Naive thymus-derived CD4-positive, alpha-beta T cell (primary cell): ENCODE measurements at regions of chr14 and their contacts with region 1.

Region 1: GRCh38 chr14:34018564-34019244 is 67.8 kb upstream of the EGLN3 start:
- DNase-seq: peak in 5 of 9 donors; percentile 10 to 46 (median 19)
- ATAC-seq: peak; percentile 78
- H3K4me3 ChIP-seq: peak overlapping the region; percentile 45
- H3K4me3 Mint-ChIP-seq: peak overlapping the region; percentile 69 to 94 (median 84)
- H3K27ac ChIP-seq: peak overlapping the region; percentile 47
- H3K27ac Mint-ChIP-seq: peak overlapping the region; percentile 2 to 98 (median 95)
- H3K4me1 ChIP-seq: no peaks in the 10 kb centered on the region
- H3K4me1 Mint-ChIP-seq: peaks cover 6 to 40% (median 17%) of the 10 kb centered on the region in 7 donors
- H3K27me3 ChIP-seq: no peaks in the 10 kb centered on the region
- H3K27me3 Mint-ChIP-seq: peaks cover 0 to 8% (median 0%) of the 10 kb centered on the region in 5 donors

Region 2: GRCh38 chr14:33499687-33500086 is 519.0 kb before region 1 on chr14:
- CTCF ChIA-PET with region 1: no interaction called
- POLR2A ChIA-PET with region 1: no interaction called
- intact Hi-C with region 1: no loop called
- DNase-seq: no peak
- ATAC-seq: no peak
- H3K4me3 ChIP-seq: no peak overlapping the region
- H3K4me3 Mint-ChIP-seq: no peak overlapping the region
- H3K27ac ChIP-seq: no peak overlapping the region
- H3K27ac Mint-ChIP-seq: no peak overlapping the region
- H3K4me1 ChIP-seq: no peaks in the 10 kb centered on the region
- H3K4me1 Mint-ChIP-seq: no peaks in the 10 kb centered on the region
- H3K27me3 ChIP-seq: no peaks in the 10 kb centered on the region
- H3K27me3 Mint-ChIP-seq: peaks cover 0 to 7% (median 5%) of the 10 kb centered on the region in 5 donors

Region 3: GRCh38 chr14:34043627-34044372 is 25.1 kb after region 1 on chr14:
- CTCF ChIA-PET with region 1: no interaction called
- POLR2A ChIA-PET with region 1: no interaction called
- intact Hi-C with region 1: loop called in 1 of 2 experiments (anchors 1 kb)
- DNase-seq: peak in 1 of 9 donors; percentile 88
- ATAC-seq: peak; percentile 81
- H3K4me3 ChIP-seq: peak overlapping the region; percentile 35
- H3K4me3 Mint-ChIP-seq: peak overlapping the region in 6 of 10 donors; percentile 1 to 78 (median 20)
- H3K27ac ChIP-seq: no peak overlapping the region
- H3K27ac Mint-ChIP-seq: peak overlapping the region in 4 of 9 donors; percentile 46 to 93 (median 54)
- H3K4me1 ChIP-seq: peaks cover 6 to 7% of the 10 kb centered on the region in 2 donors
- H3K4me1 Mint-ChIP-seq: peaks cover 6 to 74% (median 36%) of the 10 kb centered on the region in 7 donors
- H3K27me3 ChIP-seq: no peaks in the 10 kb centered on the region
- H3K27me3 Mint-ChIP-seq: peaks cover 0 to 6% (median 0%) of the 10 kb centered on the region in 5 donors

Region 4: DNA sequence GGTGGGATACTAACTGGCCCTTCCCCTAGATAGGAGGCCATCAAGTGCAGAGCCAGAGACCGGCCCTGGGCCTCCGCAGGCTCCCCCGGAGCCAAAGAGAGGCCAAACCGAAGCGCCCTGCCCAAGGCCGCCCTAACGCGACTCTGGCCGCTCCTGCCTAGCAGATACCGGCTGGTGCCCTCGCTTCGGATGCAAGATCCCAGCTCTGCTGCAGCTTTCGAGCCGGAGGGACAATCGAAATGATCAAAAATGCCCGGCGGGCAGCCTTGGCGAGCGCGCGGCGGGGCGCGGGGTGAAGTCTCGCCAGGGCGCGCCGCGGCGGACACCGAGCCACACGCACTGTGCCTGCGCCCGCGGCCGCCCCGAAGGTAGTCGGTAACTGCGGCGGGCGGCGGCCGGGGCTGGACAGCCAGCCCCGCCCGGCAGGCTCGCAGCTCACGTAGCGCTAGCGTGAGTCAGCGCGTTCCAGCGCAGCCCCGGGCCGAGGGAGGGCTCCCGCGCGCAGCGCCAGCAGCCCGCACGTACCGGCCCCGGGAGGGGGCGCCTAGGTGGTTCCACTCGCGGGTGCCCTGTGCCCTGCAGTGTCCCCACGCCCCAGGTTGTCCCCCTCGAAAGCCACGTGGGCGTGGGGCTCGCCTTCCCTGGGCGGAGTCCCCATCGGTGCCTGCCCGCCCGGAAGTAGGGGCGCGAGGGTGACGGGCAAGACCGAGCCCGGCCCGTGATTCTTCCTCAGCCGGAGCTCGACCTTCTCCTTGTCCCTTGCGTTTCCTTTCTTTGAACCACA is 41.3 kb after region 1 on chr14:
- CTCF ChIA-PET with region 1: no interaction called
- POLR2A ChIA-PET with region 1: no interaction called
- intact Hi-C with region 1: loop called in 1 of 2 experiments (anchors 2 kb)
- DNase-seq: peak in 4 of 9 donors; percentile 5 to 77 (median 22)
- ATAC-seq: peak; percentile 95
- H3K4me3 ChIP-seq: peak overlapping the region; percentile 37
- H3K4me3 Mint-ChIP-seq: peak overlapping the region; percentile 77 to 90 (median 82)
- H3K27ac ChIP-seq: no peak overlapping the region
- H3K27ac Mint-ChIP-seq: peak overlapping the region in 1 of 9 donors; percentile 92
- H3K4me1 ChIP-seq: no peaks in the 10 kb centered on the region
- H3K4me1 Mint-ChIP-seq: peaks cover 0 to 52% (median 7%) of the 10 kb centered on the region in 7 donors
- H3K27me3 ChIP-seq: no peaks in the 10 kb centered on the region
- H3K27me3 Mint-ChIP-seq: peaks cover 9 to 15% (median 13%) of the 10 kb centered on the region in 5 donors